AG04450 (cell line): ENCODE measurements at regions of chr7 and their contacts with region 1.

Region 1: DNA sequence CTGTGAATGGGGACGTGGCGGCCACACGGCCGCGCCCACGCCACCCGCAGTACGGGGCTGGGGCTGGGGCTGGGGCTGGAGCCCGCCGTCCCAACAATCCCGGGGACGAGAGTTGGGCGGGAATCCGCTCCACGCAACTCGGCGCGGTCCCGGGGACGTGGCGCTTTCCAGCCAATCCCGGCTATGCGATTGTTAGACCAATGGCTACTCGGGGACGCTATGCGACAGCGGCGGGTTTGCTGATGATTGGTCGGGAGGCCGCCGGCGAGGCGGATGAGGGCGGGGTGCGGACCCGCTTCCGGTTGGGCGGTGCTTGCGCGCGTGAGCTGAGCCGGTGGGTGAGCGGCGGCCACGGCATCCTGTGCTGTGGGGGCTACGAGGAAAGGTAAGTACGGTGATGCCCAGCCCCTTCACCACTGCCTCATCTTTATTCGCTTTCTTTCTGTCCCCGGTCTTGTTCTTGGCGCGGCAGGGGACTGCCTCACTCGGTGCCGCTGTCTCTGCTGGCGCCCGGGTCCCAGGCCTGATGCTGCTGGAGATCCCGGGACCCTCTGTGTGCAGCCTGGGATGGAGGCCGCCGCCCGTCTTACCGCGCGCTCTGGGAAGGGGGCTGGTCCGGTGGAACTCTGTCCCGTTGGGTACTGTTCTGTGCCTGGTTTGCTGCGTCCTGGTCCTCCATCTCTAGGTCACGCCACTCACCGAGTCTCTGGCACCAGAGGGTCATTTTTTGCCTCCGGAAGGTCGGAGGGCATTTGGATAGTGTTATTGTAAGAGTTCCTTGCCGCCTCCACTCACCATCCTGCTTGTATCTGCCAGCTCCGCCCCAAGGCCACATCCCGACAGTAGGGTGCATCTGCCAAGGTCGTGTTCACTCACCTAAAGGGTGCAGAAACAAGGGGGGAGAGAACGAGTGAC is at the start of gene CALU:
- DNase-seq: peak; percentile 94
- H3K4me3 ChIP-seq: peak within 1 kb of the TSS; percentile 97
- H3K27ac ChIP-seq: peak within 1 kb of the TSS; percentile 98
- H3K27me3 ChIP-seq: no peaks in the 10 kb centered on the region
- CTCF ChIP-seq: no peak
- polyA plus RNA-seq, gene CALU: 593 and 815 TPM in 2 replicates

Region 2: GRCh38 chr7:128755819-128756476 is 16.6 kb after region 1 on chr7:
- CTCF ChIA-PET with region 1: interaction called, 6 read pairs
- POLR2A ChIA-PET with region 1: interaction called, 42 read pairs
- DNase-seq: peak; percentile 86
- H3K4me3 ChIP-seq: no peak overlapping the region
- H3K27ac ChIP-seq: peak overlapping the region; percentile 75
- H3K27me3 ChIP-seq: no peaks in the 10 kb centered on the region
- CTCF ChIP-seq: no peak